CD8-positive, alpha-beta T cell (primary cell): ENCODE measurements at regions of chr13 and their contacts with region 1.

Region 1: GRCh38 chr13:38349390-38350113 is at the start of gene UFM1:
- DNase-seq: peak; percentile 68 to 95 (median 86)
- ATAC-seq: peak; percentile 94
- H3K4me3 ChIP-seq: peak within 1 kb of the TSS; percentile 82 to 92
- H3K4me3 Mint-ChIP-seq: peak within 1 kb of the TSS; percentile 99
- H3K27ac ChIP-seq: peak within 1 kb of the TSS; percentile 85 to 93
- H3K27ac Mint-ChIP-seq: peak within 1 kb of the TSS; percentile 99
- H3K4me1 ChIP-seq: peaks cover 21% of the 10 kb centered on the region
- H3K4me1 Mint-ChIP-seq: peaks cover 42% of the 10 kb centered on the region
- H3K27me3 ChIP-seq: no peaks in the 10 kb centered on the region
- H3K27me3 Mint-ChIP-seq: no peaks in the 10 kb centered on the region
- CTCF ChIP-seq: no peak
- total RNA-seq, gene UFM1: 94.0 to 97.0 TPM

Region 2: DNA sequence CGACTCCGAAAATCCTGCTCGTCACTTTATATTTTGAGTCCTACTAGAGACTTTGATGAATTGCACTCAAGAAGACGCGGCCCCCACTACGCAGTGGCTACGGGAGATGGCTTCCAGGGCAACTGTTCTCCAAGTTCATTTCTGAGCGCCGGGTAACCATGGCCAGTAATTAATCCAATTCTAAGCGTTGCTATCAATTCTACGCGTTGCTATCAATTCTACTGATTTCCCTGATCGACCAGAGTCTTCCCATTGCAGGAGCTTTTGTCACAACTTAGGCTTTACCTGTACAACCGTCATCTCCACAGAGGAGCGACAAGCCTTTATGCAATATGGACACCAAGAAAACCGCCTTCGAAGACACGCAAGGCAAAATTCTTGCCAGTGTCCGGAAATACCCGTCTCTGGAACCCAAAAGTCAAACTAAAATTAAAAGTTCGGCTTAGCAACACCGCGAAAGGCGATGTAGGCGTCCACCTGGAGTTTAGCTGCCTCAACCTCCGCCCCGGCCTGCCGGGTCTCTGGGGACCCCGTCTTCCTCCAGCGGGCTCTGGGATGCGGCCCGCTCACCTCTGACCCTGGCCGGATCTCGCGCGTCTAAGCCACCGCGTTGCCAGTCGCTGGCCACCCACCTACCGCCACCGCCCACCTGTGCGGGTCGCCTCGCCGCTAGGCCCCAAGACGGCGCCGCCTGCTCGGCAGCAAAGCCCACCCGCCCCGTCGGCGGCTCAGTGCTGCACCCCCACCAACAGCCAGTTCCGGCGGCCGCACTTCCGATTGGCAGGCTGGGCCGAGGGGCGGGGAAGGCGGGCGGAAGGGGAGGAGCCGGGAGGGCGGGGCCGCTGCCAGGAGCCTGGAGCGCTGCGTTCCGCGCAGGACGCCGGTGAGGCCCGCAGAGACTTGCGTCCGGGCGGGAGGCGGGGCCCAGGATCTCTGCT is 1290.4 kb before region 1 on chr13 and contains the start of gene SUPT20H:
- CTCF ChIA-PET with region 1: no interaction called
- POLR2A ChIA-PET with region 1: no interaction called
- intact Hi-C with region 1: loop called (anchors 1 kb)
- DNase-seq: peak; percentile 90 to 97 (median 95)
- ATAC-seq: peak; percentile 91
- H3K4me3 ChIP-seq: peak within 1 kb of the TSS; percentile 93 to 96
- H3K4me3 Mint-ChIP-seq: peak within 1 kb of the TSS; percentile 90
- H3K27ac ChIP-seq: peak within 1 kb of the TSS; percentile 95 to 96
- H3K27ac Mint-ChIP-seq: peak within 1 kb of the TSS; percentile 99
- H3K4me1 ChIP-seq: peaks cover 24% of the 10 kb centered on the region
- H3K4me1 Mint-ChIP-seq: peaks cover 50% of the 10 kb centered on the region
- H3K27me3 ChIP-seq: no peaks in the 10 kb centered on the region
- H3K27me3 Mint-ChIP-seq: no peaks in the 10 kb centered on the region
- CTCF ChIP-seq: no peak
- total RNA-seq, gene SUPT20H: 53.0 to 55.0 TPM

Region 3: GRCh38 chr13:39655569-39656324 is 1306.2 kb after region 1 on chr13 and contains the start of gene COG6:
- CTCF ChIA-PET with region 1: no interaction called
- POLR2A ChIA-PET with region 1: no interaction called
- intact Hi-C with region 1: loop called in 1 of 2 experiments (anchors 5 kb)
- DNase-seq: peak; percentile 90 to 99 (median 96)
- ATAC-seq: peak; percentile 87
- H3K4me3 ChIP-seq: peak within 1 kb of the TSS; percentile 96 to 97
- H3K4me3 Mint-ChIP-seq: peak within 1 kb of the TSS; percentile 98
- H3K27ac ChIP-seq: peak within 1 kb of the TSS; percentile 68 to 70
- H3K27ac Mint-ChIP-seq: peak within 1 kb of the TSS; percentile 93
- H3K4me1 ChIP-seq: peaks cover 6% of the 10 kb centered on the region
- H3K4me1 Mint-ChIP-seq: peaks cover 36% of the 10 kb centered on the region
- H3K27me3 ChIP-seq: peaks cover 0 to 4% of the 10 kb centered on the region in 2 experiments
- H3K27me3 Mint-ChIP-seq: no peaks in the 10 kb centered on the region
- CTCF ChIP-seq: no peak
- total RNA-seq, gene COG6: 10.1 to 18.3 TPM